ENCODE measurements at regions of chr5 and their contacts with region 1.

Region 1: DNA sequence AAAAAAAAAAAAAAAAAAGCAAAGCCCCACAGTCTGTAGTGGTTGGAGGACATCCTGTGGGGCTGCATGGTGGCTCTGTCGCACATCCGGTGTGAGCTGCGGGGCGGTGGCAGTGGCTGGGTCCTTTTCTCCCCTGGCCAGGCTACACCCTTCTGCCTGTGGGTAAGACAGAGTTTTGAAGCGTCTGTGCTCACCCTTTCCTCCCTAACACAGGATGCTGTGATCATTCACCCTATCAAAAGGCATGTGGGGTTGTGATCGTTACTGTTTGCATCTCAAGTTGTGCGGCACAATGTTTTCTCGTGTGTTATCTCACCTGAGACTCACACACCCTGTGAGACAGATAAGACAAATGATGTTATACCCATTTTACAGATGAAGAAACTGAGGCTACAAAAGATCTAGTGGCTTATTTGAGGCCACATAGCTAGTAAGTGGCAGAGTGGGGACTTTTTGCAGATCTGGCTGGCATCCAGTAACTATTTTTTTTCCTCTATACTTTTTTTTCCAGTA is 17.5 kb downstream of the IRF1 start:
- DNase-seq: peak; percentile 78 to 96 (median 91)
- H3K4me3 ChIP-seq: peak overlapping the region in 1 of 7 experiments; percentile 39
- H3K27ac ChIP-seq: no peak overlapping the region
- H3K4me1 ChIP-seq: peaks cover 10 to 80% (median 64%) of the 10 kb centered on the region in 4 experiments
- H3K27me3 ChIP-seq: no peaks in the 10 kb centered on the region

Region 2: DNA sequence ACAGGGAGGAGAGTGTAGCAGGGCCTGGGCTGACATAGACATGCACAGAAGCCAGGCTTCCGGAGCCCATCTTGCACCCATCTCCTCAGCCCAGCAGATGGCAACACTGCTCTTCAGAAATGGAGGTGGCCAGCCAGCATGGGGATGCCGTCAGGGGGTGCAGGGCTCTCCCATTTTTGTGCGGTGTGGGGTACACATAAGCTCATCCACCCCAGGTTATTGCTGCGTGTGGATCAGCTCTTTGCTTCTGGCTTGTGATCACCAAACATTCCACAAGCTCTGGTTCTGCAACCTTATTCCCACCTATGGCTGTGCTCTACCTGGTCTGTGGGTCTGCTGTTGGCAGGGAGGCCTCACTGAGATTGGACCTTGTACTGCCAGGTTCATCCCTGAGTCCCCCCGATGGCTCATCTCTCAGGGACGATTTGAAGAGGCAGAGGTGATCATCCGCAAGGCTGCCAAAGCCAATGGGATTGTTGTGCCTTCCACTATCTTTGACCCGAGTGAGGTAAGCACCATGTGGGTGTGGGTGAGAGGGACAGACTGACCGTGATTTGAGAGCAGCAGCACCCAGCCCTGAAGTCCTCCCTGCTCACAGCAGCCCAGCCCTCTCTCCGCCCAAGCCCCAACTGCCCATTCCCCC is 86.3 kb before region 1 on chr5:
- CTCF ChIA-PET with region 1: interaction called, 33 read pairs
- POLR2A ChIA-PET with region 1: interaction called, 3 read pairs
- DNase-seq: peak; percentile 74 to 89 (median 87)
- H3K4me3 ChIP-seq: no peak overlapping the region
- H3K27ac ChIP-seq: no peak overlapping the region
- H3K4me1 ChIP-seq: peaks cover 0 to 50% (median 31%) of the 10 kb centered on the region in 4 experiments
- H3K27me3 ChIP-seq: no peaks in the 10 kb centered on the region

Region 3: DNA sequence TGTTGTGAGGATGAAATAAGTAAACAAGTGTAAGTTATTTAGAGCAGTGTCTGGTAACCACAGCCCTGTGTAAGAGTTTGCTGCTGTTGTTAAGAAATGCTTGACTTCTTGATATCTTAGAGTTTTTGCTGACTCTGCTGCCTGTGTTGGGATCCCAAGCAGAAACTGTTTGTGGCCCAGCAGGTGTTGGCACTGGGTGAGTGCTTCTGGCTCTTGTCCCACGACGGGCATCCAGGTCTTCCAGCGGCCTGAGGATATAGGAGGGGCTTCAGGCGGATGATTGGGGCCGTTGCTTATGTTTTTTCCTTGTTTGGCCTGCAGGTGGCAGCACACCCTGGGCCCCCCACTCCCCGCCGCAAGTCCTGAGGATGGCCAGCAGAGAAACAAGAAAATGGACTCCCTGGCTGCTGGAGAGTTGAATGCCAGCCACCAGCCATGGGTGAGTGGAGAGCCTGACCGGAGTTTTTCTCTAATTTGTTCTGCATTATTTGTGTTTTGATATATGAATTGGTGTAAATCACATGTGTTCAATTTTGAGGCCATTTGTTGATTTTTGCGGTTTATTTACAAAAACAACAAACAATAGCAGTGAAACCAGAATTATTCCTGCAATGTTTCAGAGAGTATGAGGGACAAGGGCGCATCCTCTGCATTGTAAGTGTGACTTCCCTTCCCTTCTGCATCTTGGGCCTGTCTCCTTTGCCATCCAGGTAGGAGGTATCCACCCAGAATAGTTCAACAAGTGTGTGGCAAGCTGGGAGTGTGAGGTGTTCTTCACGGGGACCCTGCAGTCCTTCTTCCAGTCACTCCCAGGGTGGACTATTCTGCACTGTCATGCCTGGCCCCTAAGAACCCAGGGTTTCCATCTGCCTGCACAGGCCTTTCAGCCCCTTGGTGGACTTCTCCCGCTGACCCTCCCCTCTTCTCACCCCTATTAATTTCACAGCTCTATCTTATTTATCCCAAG is 53.3 kb before region 1 on chr5:
- CTCF ChIA-PET with region 1: interaction called, 98 read pairs
- POLR2A ChIA-PET with region 1: interaction called, 34 read pairs
- DNase-seq: peak; percentile 74 to 83 (median 81)
- H3K4me3 ChIP-seq: peak overlapping the region in 4 of 7 experiments; percentile 27 to 58 (median 39)
- H3K27ac ChIP-seq: peak overlapping the region; percentile 71 to 80
- H3K4me1 ChIP-seq: peaks cover 41 to 97% (median 83%) of the 10 kb centered on the region in 4 experiments
- H3K27me3 ChIP-seq: no peaks in the 10 kb centered on the region

Region 4: DNA sequence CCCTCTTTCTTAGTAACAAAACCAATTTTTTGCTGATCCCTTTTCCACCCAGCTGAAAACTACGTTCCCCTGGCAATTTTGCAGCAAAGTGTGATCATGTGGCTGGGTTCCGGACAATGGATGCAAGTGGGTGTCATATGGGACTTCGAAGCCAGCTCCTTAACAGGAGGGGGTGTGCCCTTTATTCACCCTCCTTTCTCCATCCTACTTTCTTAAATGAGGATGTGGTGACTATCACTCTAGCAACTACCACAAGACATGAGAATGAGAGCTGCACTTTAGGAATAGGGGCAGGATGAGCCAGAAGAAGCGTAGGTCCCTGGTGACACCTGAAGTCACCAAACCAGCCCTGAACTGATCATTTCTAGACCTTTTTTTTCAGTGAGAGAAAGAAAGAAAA is 41.4 kb before region 1 on chr5:
- CTCF ChIA-PET with region 1: interaction called, 98 read pairs
- POLR2A ChIA-PET with region 1: interaction called, 18 read pairs
- DNase-seq: peak in 2 of 3 donors; percentile 55 to 64
- H3K4me3 ChIP-seq: no peak overlapping the region
- H3K27ac ChIP-seq: peak overlapping the region in 1 of 2 experiments; percentile 52
- H3K4me1 ChIP-seq: peaks cover 52 to 87% (median 77%) of the 10 kb centered on the region in 4 experiments
- H3K27me3 ChIP-seq: no peaks in the 10 kb centered on the region

Region 5: GRCh38 chr5:132437604-132438266 is 35.3 kb before region 1 on chr5:
- CTCF ChIA-PET with region 1: interaction called, 22 read pairs
- POLR2A ChIA-PET with region 1: interaction called, 18 read pairs
- DNase-seq: peak in 2 of 3 donors; percentile 62 to 72
- H3K4me3 ChIP-seq: peak overlapping the region in 1 of 7 experiments; percentile 10
- H3K27ac ChIP-seq: peak overlapping the region; percentile 37 to 75
- H3K4me1 ChIP-seq: peaks cover 16 to 74% (median 62%) of the 10 kb centered on the region in 4 experiments
- H3K27me3 ChIP-seq: no peaks in the 10 kb centered on the region

Region 6: DNA sequence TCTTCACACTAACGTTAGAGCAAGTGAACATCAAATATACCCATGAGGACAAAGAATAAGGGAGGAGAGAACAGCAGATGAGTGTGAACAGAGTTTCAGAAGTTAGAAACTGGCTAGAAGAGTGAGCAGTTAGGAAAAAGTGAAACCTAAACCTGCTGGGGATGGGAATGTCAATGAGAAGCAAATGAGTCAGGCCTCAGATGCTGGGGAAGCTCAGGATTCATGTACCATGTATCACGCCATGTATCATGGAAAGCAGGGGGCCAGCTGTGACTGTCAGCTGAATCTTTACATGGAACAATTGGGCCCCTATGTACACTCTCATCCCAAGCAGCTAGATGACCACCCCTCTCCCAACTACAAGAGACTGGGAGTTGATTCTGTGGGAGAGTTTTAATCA is 377.0 kb after region 1 on chr5:
- CTCF ChIA-PET with region 1: no interaction called
- POLR2A ChIA-PET with region 1: no interaction called
- DNase-seq: no peak
- H3K4me3 ChIP-seq: no peak overlapping the region
- H3K27ac ChIP-seq: no peak overlapping the region
- H3K4me1 ChIP-seq: peaks cover 0 to 2% (median 0%) of the 10 kb centered on the region in 4 experiments
- H3K27me3 ChIP-seq: no peaks in the 10 kb centered on the region

Measured in common myeloid progenitor, CD34-positive (primary cell).